ENCODE measurements at regions of chr17 and their contacts with region 1.

Region 1: GRCh38 chr17:13594762-13595598 is 6.7 kb downstream of the HS3ST3A1 start:
- DNase-seq: peak; percentile 62
- H3K4me3 ChIP-seq: no peak overlapping the region
- H3K27ac ChIP-seq: no peak overlapping the region
- H3K4me1 ChIP-seq: peaks cover 3% of the 10 kb centered on the region
- H3K27me3 ChIP-seq: no peaks in the 10 kb centered on the region
- CTCF ChIP-seq: peak; percentile 88 to 91

Region 2: GRCh38 chr17:13337864-13338371 is 257.1 kb before region 1 on chr17:
- CTCF ChIA-PET with region 1: no interaction called
- dilution Hi-C with region 1: no loop called
- in situ Hi-C with region 1: loop called (anchors 10 to 25 kb)
- intact Hi-C with region 1: loop called (anchors 1 kb)
- DNase-seq: peak; percentile 43
- H3K4me3 ChIP-seq: peak overlapping the region; percentile 11 to 47 (median 46)
- H3K27ac ChIP-seq: peak overlapping the region; percentile 34
- H3K4me1 ChIP-seq: peaks cover 4% of the 10 kb centered on the region
- H3K27me3 ChIP-seq: no peaks in the 10 kb centered on the region
- CTCF ChIP-seq: peak; percentile 77 to 85

Region 3: GRCh38 chr17:13822700-13823099 is 227.7 kb after region 1 on chr17:
- CTCF ChIA-PET with region 1: no interaction called
- dilution Hi-C with region 1: no loop called
- in situ Hi-C with region 1: no loop called
- intact Hi-C with region 1: no loop called
- DNase-seq: no peak
- H3K4me3 ChIP-seq: no peak overlapping the region
- H3K27ac ChIP-seq: no peak overlapping the region
- H3K4me1 ChIP-seq: no peaks in the 10 kb centered on the region
- H3K27me3 ChIP-seq: no peaks in the 10 kb centered on the region
- CTCF ChIP-seq: no peak

Region 4: GRCh38 chr17:14069251-14070021 is 474.5 kb after region 1 on chr17 and contains the start of gene COX10:
- CTCF ChIA-PET with region 1: no interaction called
- dilution Hi-C with region 1: no loop called
- in situ Hi-C with region 1: no loop called
- intact Hi-C with region 1: loop called (anchors 5 kb)
- DNase-seq: peak; percentile 85
- H3K4me3 ChIP-seq: peak within 1 kb of the TSS; percentile 92 to 97 (median 97)
- H3K27ac ChIP-seq: peak within 1 kb of the TSS; percentile 86
- H3K4me1 ChIP-seq: peaks cover 6% of the 10 kb centered on the region
- H3K27me3 ChIP-seq: no peaks in the 10 kb centered on the region
- CTCF ChIP-seq: no peak
- total RNA-seq, gene COX10: 18.2 to 18.4 TPM

Region 5: GRCh38 chr17:15157051-15157450 is 1562.1 kb after region 1 on chr17:
- CTCF ChIA-PET with region 1: no interaction called
- dilution Hi-C with region 1: no loop called
- in situ Hi-C with region 1: loop called in 1 of 2 experiments (anchors 25 kb)
- intact Hi-C with region 1: loop called (anchors 1 kb)
- DNase-seq: no peak
- H3K4me3 ChIP-seq: no peak overlapping the region
- H3K27ac ChIP-seq: no peak overlapping the region
- H3K4me1 ChIP-seq: no peaks in the 10 kb centered on the region
- H3K27me3 ChIP-seq: peaks cover 2% of the 10 kb centered on the region
- CTCF ChIP-seq: no peak